Psoas muscle (tissue), 8 donors: ENCODE measurements at regions of chr4 and their contacts with region 1.

Region 1: DNA sequence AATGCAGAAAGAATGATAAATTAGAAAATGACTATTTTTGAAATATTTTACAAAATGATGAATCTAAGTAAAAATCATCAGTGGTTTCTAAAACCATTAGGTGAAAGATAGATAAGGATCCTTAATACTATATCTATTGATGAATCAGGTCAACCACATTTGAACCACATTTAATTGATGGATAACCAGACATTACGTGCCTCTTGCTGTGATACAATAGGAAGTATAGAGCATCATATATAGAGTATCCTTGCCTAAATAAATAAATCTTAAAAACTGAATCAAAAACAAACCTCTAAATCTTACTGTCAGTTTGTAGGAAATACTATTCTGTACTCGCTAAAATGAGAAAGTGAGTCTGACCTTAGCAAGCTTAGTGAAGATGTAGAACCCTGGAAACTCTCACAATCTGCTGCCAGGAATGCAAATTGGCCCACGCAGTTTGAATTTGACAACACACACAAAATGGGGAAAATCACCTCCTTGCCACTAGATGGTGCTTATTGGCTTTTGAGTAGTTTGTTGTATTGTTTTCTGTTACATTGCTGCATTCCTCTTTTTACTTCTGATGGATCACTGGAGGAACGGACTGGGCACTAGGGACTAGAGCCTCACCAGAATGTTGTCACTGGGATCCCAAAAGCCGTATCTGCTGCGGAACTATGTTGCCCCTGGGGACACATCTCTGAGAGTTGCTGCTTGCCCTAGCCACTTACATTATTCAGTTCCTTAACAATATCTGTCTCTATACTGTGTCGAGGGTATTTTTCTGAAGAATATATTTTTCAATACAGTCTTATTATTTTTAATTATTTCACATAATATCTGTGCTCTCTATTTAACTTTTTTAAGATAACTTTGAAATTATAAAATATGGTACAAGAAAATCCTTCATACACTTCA is 25.4 kb upstream of the SLAIN2 start:
- DNase-seq: no peak
- ATAC-seq: peak in 3 of 4 donors; percentile 51 to 78 (median 60)
- H3K4me3 ChIP-seq: no peak overlapping the region
- H3K27ac ChIP-seq: no peak overlapping the region
- H3K4me1 ChIP-seq: no peaks in the 10 kb centered on the region
- H3K27me3 ChIP-seq: no peaks in the 10 kb centered on the region
- CTCF ChIP-seq: peak; percentile 70

Region 2: GRCh38 chr4:48546336-48546735 is 230.4 kb after region 1 on chr4:
- intact Hi-C with region 1: loop called in 1 of 2 experiments (anchors 5 kb)
- DNase-seq: no peak
- ATAC-seq: no peak
- H3K4me3 ChIP-seq: no peak overlapping the region
- H3K27ac ChIP-seq: no peak overlapping the region
- H3K4me1 ChIP-seq: no peaks in the 10 kb centered on the region
- H3K27me3 ChIP-seq: no peaks in the 10 kb centered on the region
- CTCF ChIP-seq: peak; percentile 45

Region 3: GRCh38 chr4:49044270-49044669 is 728.3 kb after region 1 on chr4:
- intact Hi-C with region 1: loop called in 1 of 2 experiments (anchors 5 kb)
- DNase-seq: no peak
- ATAC-seq: no peak
- H3K4me3 ChIP-seq: no peak overlapping the region
- H3K27ac ChIP-seq: no peak overlapping the region
- H3K4me1 ChIP-seq: no peaks in the 10 kb centered on the region
- H3K27me3 ChIP-seq: no peaks in the 10 kb centered on the region
- CTCF ChIP-seq: no peak